CD4-positive, alpha-beta T cell (primary cell): ENCODE measurements at regions of chr17 and their contacts with region 1.

Region 1: DNA sequence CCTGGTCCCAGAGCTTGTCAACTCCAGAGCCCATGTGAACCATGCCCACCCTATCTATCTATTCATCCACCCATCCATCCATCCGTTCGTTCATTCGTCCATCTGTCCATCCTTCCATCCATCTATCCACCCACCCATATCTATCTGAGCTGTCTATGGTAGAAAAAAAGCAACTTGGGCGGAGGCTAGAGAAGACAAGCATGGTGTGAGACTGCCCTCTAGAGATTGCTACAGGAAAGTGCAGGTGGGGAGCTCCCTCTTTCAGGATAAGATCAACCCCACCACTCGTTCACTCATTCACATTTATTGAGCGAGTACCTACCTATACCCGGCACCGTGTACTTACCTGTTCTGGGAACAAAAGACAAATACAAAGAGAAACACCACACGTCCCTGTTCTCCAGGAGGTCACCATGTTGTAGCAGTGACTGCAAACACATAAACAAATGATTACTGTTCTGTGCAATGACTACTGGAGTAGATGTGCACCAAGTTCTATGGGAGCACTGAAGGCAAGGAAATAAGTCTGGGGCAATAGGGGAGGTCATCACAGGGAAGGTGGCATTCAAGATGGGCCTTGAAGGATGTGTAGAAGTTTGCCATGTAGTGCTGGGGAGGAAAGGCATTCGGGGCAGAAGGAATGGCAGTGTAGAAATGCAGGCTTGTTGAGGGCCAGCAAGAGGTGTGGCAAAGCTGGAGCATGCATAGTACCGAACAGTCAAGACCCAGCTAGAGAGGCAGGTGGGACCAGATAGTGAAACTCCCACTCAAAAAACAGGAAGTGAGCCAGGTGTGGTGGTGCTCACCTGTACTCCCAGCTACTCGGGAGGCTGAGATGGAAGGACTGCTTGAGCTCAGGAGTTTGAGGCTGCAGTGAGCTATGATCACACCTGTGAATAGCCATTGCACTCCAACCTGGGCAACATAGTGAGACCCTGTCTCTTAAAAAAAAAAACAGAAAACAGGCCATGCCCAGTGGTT is 13.4 kb upstream of the ATP5MC1 start:
- DNase-seq: peak; percentile 21 to 86 (median 44)
- ATAC-seq: peak; percentile 99
- H3K4me3 ChIP-seq: no peak overlapping the region
- H3K4me3 Mint-ChIP-seq: no peak overlapping the region
- H3K27ac ChIP-seq: no peak overlapping the region
- H3K27ac Mint-ChIP-seq: no peak overlapping the region
- H3K4me1 ChIP-seq: peaks cover under 1% of the 10 kb centered on the region
- H3K4me1 Mint-ChIP-seq: no peaks in the 10 kb centered on the region
- H3K27me3 ChIP-seq: peaks cover 2 to 5% of the 10 kb centered on the region in 2 experiments
- H3K27me3 Mint-ChIP-seq: no peaks in the 10 kb centered on the region
- CTCF ChIP-seq: peak; percentile 94

Region 2: DNA sequence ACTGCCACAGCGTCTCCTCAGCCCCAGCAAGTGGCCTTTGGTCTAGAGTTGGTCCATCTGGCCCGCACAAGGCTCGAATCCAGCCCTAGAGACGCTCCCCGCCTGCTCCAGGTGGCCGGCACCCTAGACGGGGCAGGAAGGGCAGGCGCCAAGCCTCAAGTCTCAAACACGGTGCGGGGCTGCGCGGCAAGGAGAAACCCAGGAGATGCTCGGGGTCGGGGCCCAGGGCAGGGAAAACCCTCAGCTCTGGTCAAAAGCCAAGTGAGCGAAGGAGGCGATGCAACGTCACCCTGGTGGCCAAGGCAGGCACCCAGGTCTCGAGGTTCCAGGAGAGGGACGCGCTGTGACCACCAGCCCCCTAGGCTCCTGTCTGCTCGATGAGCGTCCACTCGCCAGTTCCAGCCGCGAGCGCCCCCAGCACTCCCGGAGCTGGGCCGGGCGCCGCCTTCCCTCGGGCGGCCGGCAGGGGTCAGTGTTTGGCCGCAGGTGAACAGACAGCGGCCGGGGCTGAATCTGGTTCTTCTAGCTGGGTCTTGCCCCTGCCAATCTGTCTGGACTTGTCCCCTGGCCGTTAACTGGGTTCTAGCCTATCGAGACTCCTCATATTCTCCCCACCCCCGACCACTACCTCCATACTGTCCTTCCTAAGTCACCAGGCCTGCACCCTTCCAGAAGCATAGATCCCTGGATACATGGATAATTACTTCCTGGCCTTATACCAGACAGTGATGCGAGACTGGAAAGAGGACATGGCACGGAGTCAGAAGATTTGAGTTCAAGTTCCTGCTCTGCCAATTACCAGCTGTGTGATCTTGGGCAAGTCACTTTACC is 200.9 kb before region 1 on chr17:
- CTCF ChIA-PET with region 1: interaction called, 23 read pairs
- POLR2A ChIA-PET with region 1: interaction called, 8 read pairs
- intact Hi-C with region 1: loop called (anchors 1 to 2 kb)
- DNase-seq: peak; percentile 39 to 82 (median 64)
- ATAC-seq: peak; percentile 94
- H3K4me3 ChIP-seq: no peak overlapping the region
- H3K4me3 Mint-ChIP-seq: no peak overlapping the region
- H3K27ac ChIP-seq: no peak overlapping the region
- H3K27ac Mint-ChIP-seq: no peak overlapping the region
- H3K4me1 ChIP-seq: peaks cover 8% of the 10 kb centered on the region
- H3K4me1 Mint-ChIP-seq: no peaks in the 10 kb centered on the region
- H3K27me3 ChIP-seq: peaks cover 12 to 18% of the 10 kb centered on the region in 2 experiments
- H3K27me3 Mint-ChIP-seq: peaks cover 81% of the 10 kb centered on the region
- CTCF ChIP-seq: peak; percentile 98

Region 3: DNA sequence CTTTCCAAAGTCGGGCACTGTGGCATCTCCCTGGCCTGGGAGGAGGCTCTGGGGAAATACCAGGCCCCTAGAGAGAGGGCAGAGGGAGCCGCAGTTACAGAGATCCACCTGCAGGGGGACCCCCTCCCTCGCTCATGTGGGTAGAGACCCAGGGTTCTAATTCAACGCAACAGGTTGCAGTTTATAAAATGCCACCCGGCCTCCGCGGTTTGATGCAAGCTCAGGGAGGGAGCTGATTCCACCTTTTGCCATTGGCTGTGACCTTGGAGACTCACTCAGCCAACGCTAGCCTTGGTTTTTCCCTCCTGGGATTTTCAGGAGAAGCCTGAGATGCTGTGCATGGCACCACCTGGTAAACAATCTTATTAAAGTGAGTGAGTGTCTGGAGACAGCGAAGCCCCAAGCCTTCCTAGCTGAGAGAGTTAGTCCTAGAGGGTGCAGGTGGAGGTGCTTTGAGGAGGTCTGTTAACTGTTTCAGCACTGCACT is 74.2 kb before region 1 on chr17:
- CTCF ChIA-PET with region 1: interaction called, 56 read pairs
- POLR2A ChIA-PET with region 1: interaction called, 9 read pairs
- intact Hi-C with region 1: loop called (anchors 1 kb)
- DNase-seq: peak; percentile 44 to 79 (median 58)
- ATAC-seq: peak; percentile 89
- H3K4me3 ChIP-seq: no peak overlapping the region
- H3K4me3 Mint-ChIP-seq: no peak overlapping the region
- H3K27ac ChIP-seq: no peak overlapping the region
- H3K27ac Mint-ChIP-seq: no peak overlapping the region
- H3K4me1 ChIP-seq: peaks cover 4% of the 10 kb centered on the region
- H3K4me1 Mint-ChIP-seq: no peaks in the 10 kb centered on the region
- H3K27me3 ChIP-seq: peaks cover 0 to 8% of the 10 kb centered on the region in 2 experiments
- H3K27me3 Mint-ChIP-seq: peaks cover 23% of the 10 kb centered on the region
- CTCF ChIP-seq: peak; percentile 98

Region 4: GRCh38 chr17:48841395-48841831 is 37.8 kb before region 1 on chr17:
- CTCF ChIA-PET with region 1: interaction called, 13 read pairs
- POLR2A ChIA-PET with region 1: interaction called, 3 read pairs
- intact Hi-C with region 1: no loop called
- DNase-seq: peak in 4 of 14 experiments; percentile 20 to 86 (median 72)
- ATAC-seq: peak; percentile 84
- H3K4me3 ChIP-seq: peak overlapping the region; percentile 46
- H3K4me3 Mint-ChIP-seq: peak overlapping the region; percentile 79
- H3K27ac ChIP-seq: peak overlapping the region; percentile 44 to 80
- H3K27ac Mint-ChIP-seq: peak overlapping the region; percentile 91
- H3K4me1 ChIP-seq: peaks cover 50% of the 10 kb centered on the region
- H3K4me1 Mint-ChIP-seq: peaks cover 51% of the 10 kb centered on the region
- H3K27me3 ChIP-seq: no peaks in the 10 kb centered on the region
- H3K27me3 Mint-ChIP-seq: no peaks in the 10 kb centered on the region
- CTCF ChIP-seq: no peak

Region 5: GRCh38 chr17:48892940-48893645 is 13.9 kb after region 1 on chr17:
- CTCF ChIA-PET with region 1: interaction called, 16 read pairs
- POLR2A ChIA-PET with region 1: interaction called, 7 read pairs
- intact Hi-C with region 1: no loop called
- DNase-seq: peak in 2 of 14 experiments; percentile 43 to 49
- ATAC-seq: no peak
- H3K4me3 ChIP-seq: peak overlapping the region; percentile 74
- H3K4me3 Mint-ChIP-seq: peak overlapping the region; percentile 90
- H3K27ac ChIP-seq: peak overlapping the region; percentile 80 to 86
- H3K27ac Mint-ChIP-seq: peak overlapping the region; percentile 91
- H3K4me1 ChIP-seq: peaks cover 25% of the 10 kb centered on the region
- H3K4me1 Mint-ChIP-seq: peaks cover 22% of the 10 kb centered on the region
- H3K27me3 ChIP-seq: no peaks in the 10 kb centered on the region
- H3K27me3 Mint-ChIP-seq: no peaks in the 10 kb centered on the region
- CTCF ChIP-seq: no peak